A673 (cell line): ENCODE measurements at regions of chr3 and their contacts with region 1.

Region 1: GRCh38 chr3:4814305-4814903 is 164.8 kb upstream of the BHLHE40 start:
- DNase-seq: peak; percentile 48
- H3K4me3 ChIP-seq: no peak overlapping the region
- H3K27ac ChIP-seq: no peak overlapping the region
- H3K4me1 ChIP-seq: peaks cover 4% of the 10 kb centered on the region
- H3K27me3 ChIP-seq: no peaks in the 10 kb centered on the region
- CTCF ChIP-seq: no peak

Region 2: DNA sequence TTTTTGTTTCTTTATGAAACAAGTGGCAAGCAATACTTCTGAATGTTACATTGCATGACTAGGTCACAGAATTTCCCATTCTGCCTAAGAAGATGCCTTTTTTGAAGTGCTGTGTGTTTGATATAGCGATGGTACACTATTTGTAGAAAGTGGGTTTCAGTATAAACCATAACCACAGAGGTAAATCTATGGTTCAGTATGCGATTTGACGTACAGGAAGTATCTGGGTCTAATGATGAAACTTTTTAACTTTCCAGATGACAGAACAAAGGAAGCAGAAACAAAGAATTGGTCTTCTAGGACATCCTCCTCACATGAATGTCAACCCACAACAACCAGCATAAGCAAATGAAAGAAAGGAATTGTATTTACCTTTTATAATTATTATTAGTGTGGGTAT is 31.5 kb after region 1 on chr3:
- CTCF ChIA-PET with region 1: no interaction called
- POLR2A ChIA-PET with region 1: interaction called, 14 read pairs
- intact Hi-C with region 1: no loop called
- DNase-seq: no peak
- H3K4me3 ChIP-seq: no peak overlapping the region
- H3K27ac ChIP-seq: no peak overlapping the region
- H3K4me1 ChIP-seq: no peaks in the 10 kb centered on the region
- H3K27me3 ChIP-seq: no peaks in the 10 kb centered on the region
- CTCF ChIP-seq: no peak

Region 3: GRCh38 chr3:5006755-5007202 is 192.4 kb after region 1 on chr3:
- CTCF ChIA-PET with region 1: no interaction called
- POLR2A ChIA-PET with region 1: no interaction called
- intact Hi-C with region 1: no loop called
- DNase-seq: no peak
- H3K4me3 ChIP-seq: no peak overlapping the region
- H3K27ac ChIP-seq: no peak overlapping the region
- H3K4me1 ChIP-seq: no peaks in the 10 kb centered on the region
- H3K27me3 ChIP-seq: no peaks in the 10 kb centered on the region
- CTCF ChIP-seq: no peak

Region 4: GRCh38 chr3:5122030-5122740 is 307.8 kb after region 1 on chr3 and contains the start of gene ARL8B:
- CTCF ChIA-PET with region 1: no interaction called
- POLR2A ChIA-PET with region 1: no interaction called
- intact Hi-C with region 1: no loop called
- DNase-seq: peak; percentile 91
- H3K4me3 ChIP-seq: peak within 1 kb of the TSS; percentile 98
- H3K27ac ChIP-seq: peak within 1 kb of the TSS; percentile 86
- H3K4me1 ChIP-seq: peaks cover 12% of the 10 kb centered on the region
- H3K27me3 ChIP-seq: no peaks in the 10 kb centered on the region
- CTCF ChIP-seq: peak; percentile 91
- total RNA-seq, gene ARL8B: 44.7 and 54.0 TPM in 2 replicates